ENCODE measurements at regions of chr11 and their contacts with region 1.

Region 1: DNA sequence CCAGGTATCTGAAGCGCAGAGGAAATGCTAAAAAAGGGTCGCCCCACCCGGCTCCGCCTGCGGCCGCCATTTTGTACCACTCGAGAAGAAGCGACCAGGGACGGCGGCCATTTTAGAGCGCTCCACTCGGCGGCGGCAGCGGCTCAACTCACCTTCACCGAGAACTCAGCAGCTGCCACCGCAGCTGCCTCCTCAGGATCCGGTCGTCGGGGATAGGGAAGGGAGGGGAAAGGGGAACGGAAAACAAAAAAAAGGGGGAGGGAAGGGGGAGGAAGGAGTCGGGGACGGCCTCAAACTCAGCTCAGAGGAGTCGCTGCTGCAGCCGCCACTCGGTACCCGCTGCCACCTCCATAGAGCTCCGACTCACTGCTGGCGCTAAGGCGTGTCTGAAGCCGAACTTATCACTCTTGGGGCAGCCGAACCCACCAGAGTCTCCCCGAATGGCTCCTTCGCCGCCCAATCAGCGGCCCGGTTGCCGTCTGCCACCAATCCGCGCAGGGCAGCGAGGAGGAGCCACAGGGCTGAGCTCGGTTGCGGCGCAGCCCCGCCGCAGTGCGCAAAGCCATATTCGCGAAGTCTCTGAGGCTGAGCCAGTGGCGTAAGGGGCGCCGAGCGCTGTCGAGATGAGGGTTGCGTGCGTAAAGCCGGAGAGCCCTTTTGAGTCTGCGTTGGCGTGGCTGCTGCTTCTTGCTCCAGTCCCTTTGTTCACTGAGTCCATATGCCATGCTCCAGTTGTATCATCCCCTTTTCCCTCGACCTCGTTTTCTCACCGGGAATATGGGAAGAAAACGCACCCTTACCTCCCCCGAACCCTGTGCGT is at the start of gene EIF4G2:
- H3K4me3 Mint-ChIP-seq: peak within 1 kb of the TSS; percentile 92
- H3K27ac Mint-ChIP-seq: peak within 1 kb of the TSS; percentile 99
- H3K4me1 Mint-ChIP-seq: peaks cover 38% of the 10 kb centered on the region
- H3K27me3 Mint-ChIP-seq: peaks cover 3% of the 10 kb centered on the region

Region 2: DNA sequence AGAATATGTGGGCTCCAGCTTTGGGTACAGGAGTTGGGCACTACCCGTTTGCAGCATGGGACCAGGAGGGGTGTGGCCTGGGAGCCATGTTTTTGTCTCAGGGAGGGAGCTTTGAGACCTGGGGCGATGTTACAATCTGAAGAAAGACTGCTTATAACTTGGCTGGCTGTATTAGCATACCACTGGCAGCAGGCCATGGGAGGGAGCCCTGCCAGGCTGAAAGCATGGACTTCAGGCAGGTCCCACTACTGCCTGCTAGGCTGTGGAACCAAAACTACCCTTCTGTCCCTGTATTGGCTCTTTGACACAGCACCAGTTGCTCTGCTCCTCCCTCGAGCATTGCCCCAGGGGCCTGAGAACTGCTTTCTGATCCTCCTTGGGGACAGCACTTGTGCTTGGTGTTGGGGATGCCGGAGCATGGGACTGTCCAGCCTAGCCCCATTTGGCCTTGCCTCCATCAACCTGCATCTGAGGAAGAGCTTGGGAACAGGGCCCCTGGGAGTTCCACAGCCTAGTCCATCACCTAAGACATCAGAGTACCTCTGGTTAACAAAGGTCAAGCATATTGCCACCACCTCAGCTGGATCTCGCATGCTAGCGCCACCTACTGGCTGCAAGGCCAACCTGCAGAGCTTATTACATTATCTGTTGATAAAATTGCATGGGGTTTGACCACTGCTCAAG is 732.2 kb before region 1 on chr11:
- intact Hi-C with region 1: no loop called
- H3K4me3 Mint-ChIP-seq: no peak overlapping the region
- H3K27ac Mint-ChIP-seq: no peak overlapping the region
- H3K4me1 Mint-ChIP-seq: no peaks in the 10 kb centered on the region
- H3K27me3 Mint-ChIP-seq: no peaks in the 10 kb centered on the region

Region 3: GRCh38 chr11:10750838-10751580 is 57.8 kb before region 1 on chr11 and contains the start of gene CTR9:
- intact Hi-C with region 1: loop called (anchors 10 kb)
- H3K4me3 Mint-ChIP-seq: peak within 1 kb of the TSS; percentile 95
- H3K27ac Mint-ChIP-seq: peak within 1 kb of the TSS; percentile 97
- H3K4me1 Mint-ChIP-seq: peaks cover 11% of the 10 kb centered on the region
- H3K27me3 Mint-ChIP-seq: no peaks in the 10 kb centered on the region